ENCODE measurements at regions of chr1 and their contacts with region 1.

Region 1: DNA sequence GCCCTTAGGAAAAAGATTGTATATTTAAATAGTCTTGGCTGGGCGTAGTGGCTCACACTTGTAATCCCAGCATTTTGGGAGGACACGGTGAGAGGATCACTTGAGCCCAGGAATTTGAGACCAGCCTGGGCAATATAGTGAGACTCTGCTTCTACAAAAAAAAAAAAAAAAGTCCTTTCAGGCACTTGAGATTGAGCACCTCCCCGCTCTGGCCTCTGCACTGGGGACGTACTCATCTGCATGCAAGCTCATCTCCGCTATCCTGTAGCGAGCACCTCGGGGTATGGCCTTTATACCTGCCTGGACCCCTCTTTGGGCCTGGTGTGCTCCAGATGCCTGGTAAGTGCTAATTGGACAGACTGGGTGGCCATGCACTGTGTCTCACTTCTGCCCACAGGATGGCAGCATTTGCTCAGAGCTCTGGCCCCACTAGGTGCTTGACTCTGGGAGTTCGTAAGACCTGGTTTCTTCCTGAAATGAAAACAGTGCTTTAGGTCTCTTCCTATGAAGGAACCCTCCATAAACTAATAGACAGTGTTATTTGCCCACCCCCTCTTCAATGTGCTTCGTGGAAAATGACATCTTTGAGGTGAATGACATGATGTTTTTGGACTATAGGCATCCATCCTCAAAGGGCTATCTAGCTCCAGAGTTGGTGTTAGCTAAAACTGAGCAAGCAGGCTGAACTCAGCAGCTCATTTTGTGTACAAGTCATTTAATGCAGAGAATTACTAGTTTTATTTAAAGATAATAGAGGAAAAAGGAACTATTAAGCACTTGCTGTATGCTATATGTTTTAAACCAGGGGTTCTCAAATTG is 61.7 kb upstream of the ADAR start:
- DNase-seq: peak; percentile 85 to 88
- ATAC-seq: peak; percentile 100
- H3K4me3 ChIP-seq: no peak overlapping the region
- H3K27ac ChIP-seq: no peak overlapping the region
- H3K4me1 ChIP-seq: no peaks in the 10 kb centered on the region
- CTCF ChIP-seq: peak; percentile 87
- EP300 ChIP-seq: no peak
- POLR2A ChIP-seq: no peak
- RAD21 ChIP-seq: peak; percentile 94 to 97

Region 2: DNA sequence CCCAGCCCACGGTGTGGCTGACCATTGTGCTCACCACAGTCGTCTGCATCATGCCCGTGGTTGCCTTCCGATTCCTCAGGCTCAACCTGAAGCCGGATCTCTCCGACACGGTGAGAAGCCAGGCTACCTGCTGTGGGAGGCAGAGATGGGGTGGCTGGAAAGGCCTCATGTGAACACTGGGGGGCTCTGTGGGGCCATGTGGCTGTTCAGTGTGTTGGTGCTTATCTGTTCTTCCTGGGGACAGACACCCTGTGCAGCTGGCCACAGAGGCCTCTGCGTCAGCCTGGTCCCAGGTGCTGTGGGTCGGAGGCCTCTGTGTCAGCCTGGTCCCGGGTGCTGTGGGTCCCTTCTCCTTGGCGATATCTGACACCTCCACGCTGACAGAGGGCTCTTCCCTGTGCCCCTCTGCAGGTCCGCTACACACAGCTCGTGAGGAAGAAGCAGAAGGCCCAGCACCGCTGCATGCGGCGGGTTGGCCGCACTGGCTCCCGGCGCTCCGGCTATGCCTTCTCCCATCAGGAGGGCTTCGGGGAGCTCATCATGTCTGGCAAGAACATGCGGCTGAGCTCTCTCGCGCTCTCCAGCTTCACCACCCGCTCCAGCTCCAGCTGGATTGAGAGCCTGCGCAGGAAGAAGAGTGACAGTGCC is 321.1 kb before region 1 on chr1:
- CTCF ChIA-PET with region 1: no interaction called
- POLR2A ChIA-PET with region 1: no interaction called
- DNase-seq: peak in 1 of 2 experiments; percentile 24
- ATAC-seq: peak; percentile 38 to 53; a peak in 4 of 6 replicates
- H3K4me3 ChIP-seq: no peak overlapping the region
- H3K27ac ChIP-seq: no peak overlapping the region
- H3K4me1 ChIP-seq: peaks cover 2% of the 10 kb centered on the region; the same call in 1 of the 3 replicates
- CTCF ChIP-seq: peak; percentile 20; the same call in 1 of the 3 replicates
- EP300 ChIP-seq: no peak
- POLR2A ChIP-seq: no peak
- RAD21 ChIP-seq: peak; percentile 42 to 44; a peak in 4 of 5 replicates

Region 3: GRCh38 chr1:154558575-154559465 is 110.9 kb before region 1 on chr1 and contains the start of gene UBE2Q1:
- CTCF ChIA-PET with region 1: interaction called, 25 read pairs
- POLR2A ChIA-PET with region 1: no interaction called
- DNase-seq: peak; percentile 92 to 99
- ATAC-seq: peak; percentile 90 to 94
- H3K4me3 ChIP-seq: peak within 1 kb of the TSS; percentile 85
- H3K27ac ChIP-seq: peak within 1 kb of the TSS; percentile 93 to 96
- H3K4me1 ChIP-seq: peaks cover 16% of the 10 kb centered on the region
- CTCF ChIP-seq: no peak
- EP300 ChIP-seq: no peak
- POLR2A ChIP-seq: peak; percentile 73
- RAD21 ChIP-seq: no peak
- polyA plus RNA-seq, gene UBE2Q1: 17.6 and 26.6 TPM in 2 replicates

Region 4: DNA sequence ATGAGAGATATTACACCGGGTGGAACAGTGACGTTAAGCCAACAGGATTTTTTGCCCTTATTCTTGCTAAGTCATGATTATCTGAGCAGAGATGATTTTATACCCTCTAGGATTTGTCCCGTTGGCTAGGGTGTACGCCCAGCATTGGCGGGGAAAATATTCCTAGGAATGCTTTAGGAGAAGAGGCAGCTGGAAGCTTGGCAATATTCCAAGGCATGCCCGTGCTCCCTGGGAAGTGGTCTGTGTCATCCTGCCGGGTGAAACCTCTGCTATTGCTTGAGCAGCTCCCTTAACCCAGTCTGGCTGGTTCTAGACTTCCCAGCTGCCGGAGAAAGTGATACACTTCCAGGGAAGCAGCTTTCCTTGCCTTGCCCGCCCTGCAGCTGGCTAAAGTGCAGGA is 85.9 kb before region 1 on chr1:
- CTCF ChIA-PET with region 1: no interaction called
- POLR2A ChIA-PET with region 1: no interaction called
- DNase-seq: no peak
- ATAC-seq: no peak
- H3K4me3 ChIP-seq: no peak overlapping the region
- H3K27ac ChIP-seq: no peak overlapping the region
- H3K4me1 ChIP-seq: no peaks in the 10 kb centered on the region
- CTCF ChIP-seq: no peak
- EP300 ChIP-seq: no peak
- POLR2A ChIP-seq: no peak
- RAD21 ChIP-seq: no peak

Region 5: DNA sequence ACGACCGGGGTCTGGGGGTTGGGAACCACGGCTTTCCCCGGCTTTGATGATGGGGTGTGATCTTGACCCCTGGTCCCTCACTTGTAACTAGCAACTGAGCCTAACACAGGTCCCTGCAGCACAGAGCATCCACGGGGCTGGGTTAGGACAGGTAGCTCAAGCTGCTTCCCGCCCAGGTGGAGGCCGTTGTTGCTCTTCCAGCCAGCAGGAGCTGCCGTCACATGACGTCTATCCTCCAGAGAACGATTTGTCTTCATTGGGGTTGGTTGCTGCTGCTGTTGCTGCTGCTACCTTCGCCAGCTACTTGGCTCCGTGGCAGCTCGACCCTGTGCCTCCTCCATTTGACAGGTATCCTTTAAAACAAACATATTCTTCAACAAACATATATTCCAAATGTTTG is 12.6 kb after region 1 on chr1:
- CTCF ChIA-PET with region 1: interaction called, 35 read pairs
- POLR2A ChIA-PET with region 1: no interaction called
- DNase-seq: no peak
- ATAC-seq: no peak
- H3K4me3 ChIP-seq: no peak overlapping the region
- H3K27ac ChIP-seq: no peak overlapping the region
- H3K4me1 ChIP-seq: no peaks in the 10 kb centered on the region
- CTCF ChIP-seq: no peak
- EP300 ChIP-seq: no peak
- POLR2A ChIP-seq: no peak
- RAD21 ChIP-seq: no peak

Region 6: DNA sequence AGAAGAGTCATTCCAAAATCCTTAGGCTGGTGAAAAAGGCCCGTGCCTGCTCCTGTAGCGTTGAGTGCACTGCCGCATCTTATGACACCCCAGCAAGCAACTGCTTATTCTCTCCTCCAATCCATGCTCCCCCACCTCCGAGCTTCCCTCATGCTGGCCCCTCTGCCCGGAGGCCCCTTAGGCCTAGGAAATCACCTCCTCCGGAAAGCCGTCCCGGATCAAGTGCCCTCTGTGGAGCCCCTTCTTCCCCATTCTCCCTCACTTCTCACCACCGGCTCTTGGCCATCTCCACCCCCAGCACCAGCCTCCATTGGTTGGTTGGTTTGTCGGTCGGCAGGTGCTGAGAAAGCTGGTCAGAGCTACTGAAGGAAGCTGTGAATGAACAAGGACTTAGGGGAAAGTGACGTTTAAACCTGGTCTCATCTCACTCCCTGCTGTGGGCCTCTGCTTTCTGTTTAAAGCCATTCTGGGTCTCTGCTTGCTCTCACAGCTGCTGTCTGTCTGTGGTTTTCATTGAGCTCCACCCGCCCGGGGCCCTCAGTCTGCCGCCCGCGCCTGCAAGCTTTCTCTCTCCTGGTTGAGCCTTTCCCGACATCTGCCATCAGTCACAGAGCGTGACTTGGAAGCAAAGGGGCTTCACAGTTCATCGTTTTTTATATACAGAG is 78.2 kb after region 1 on chr1:
- CTCF ChIA-PET with region 1: interaction called, 27 read pairs
- POLR2A ChIA-PET with region 1: no interaction called
- DNase-seq: no peak
- ATAC-seq: no peak
- H3K4me3 ChIP-seq: no peak overlapping the region
- H3K27ac ChIP-seq: no peak overlapping the region
- H3K4me1 ChIP-seq: no peaks in the 10 kb centered on the region
- CTCF ChIP-seq: no peak
- EP300 ChIP-seq: no peak
- POLR2A ChIP-seq: no peak
- RAD21 ChIP-seq: no peak

Region 7: DNA sequence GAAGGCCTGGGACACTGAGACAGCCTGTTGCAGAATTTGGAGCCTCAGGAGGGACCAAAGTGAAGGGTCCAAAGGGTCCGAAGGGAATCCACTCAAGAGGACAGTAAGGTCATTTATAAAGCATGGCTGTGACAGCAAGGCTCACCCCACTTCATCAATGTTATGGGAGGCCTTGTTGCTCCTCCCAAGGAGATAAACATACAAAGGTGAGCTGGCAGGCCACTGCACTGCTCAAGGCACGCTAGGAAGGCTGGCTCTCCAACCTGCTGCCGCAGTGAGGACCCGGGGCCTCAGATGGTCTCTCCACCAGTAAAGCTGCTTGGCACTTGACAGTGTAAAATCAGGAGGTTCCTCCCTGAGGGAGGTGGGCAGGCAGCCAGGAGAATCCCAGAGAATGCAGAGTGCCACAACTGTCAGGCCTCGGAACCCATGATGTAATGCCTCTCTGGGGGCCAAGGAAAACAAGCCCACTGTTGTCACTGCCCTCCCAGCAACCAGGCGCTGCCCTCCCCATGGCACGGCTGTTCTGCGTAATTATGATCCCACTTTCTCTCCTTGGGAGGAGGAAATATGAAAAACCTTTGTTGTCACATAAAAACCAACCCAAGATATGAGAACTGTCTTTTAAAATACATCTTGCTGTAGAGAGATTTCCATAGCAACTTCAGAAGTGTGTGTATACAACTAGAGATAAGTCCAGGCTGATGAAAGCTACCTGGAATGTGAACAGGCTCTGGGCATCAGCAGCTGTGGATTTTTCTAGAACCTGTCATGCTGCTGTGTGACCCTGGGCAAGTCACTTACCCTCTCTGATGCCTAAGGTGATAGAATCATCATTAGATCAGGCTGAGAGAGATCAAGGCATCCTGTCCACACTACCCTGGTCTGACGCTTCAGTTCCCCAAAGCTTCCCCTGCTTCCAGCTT is 97.9 kb after region 1 on chr1:
- CTCF ChIA-PET with region 1: interaction called, 78 read pairs
- POLR2A ChIA-PET with region 1: no interaction called
- DNase-seq: no peak
- ATAC-seq: no peak
- H3K4me3 ChIP-seq: no peak overlapping the region
- H3K27ac ChIP-seq: no peak overlapping the region
- H3K4me1 ChIP-seq: no peaks in the 10 kb centered on the region
- CTCF ChIP-seq: no peak
- EP300 ChIP-seq: no peak
- POLR2A ChIP-seq: no peak
- RAD21 ChIP-seq: no peak

Region 8: DNA sequence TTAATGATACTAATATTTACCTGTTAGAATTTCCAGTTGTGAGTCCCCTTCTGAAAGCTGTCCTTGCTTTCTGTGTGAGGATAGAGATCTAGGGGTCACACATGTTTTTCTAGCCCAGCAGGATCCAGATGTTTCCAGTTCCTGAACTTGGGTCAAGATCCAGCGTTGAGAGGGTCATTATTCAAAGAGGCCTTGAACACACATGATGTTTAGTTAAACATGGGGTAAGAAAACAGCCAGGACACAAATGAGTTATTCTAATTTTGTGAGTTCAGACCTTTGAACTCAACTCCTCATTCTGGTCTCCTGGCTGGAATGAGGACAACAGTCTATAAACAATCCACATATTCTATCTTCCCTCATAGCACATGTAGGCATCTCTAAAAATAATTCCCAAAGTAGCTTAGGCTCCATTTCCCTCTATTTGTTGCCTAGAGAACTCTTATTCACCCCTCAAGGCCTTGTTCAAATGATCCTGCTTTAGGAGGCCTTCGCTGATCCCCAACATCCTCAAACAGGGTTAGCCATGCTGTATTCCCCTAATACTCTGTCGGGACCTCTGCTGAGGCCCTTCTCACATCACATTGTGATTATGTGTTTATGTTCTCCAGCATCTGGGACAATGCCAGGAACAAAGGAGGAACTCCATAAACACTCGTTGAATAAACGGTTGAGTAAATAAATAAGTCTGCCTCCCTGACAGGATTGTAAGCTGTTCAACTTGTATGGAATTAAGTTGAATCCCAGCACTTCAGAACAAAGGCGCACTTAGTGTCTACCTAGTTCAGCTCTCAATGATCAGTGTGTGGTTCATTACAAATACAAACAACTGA is 215.4 kb after region 1 on chr1:
- CTCF ChIA-PET with region 1: interaction called, 72 read pairs
- POLR2A ChIA-PET with region 1: no interaction called
- DNase-seq: no peak
- ATAC-seq: no peak
- H3K4me3 ChIP-seq: no peak overlapping the region
- H3K27ac ChIP-seq: no peak overlapping the region
- H3K4me1 ChIP-seq: peaks cover 4% of the 10 kb centered on the region; the same call in 1 of the 3 replicates
- CTCF ChIP-seq: no peak
- EP300 ChIP-seq: no peak
- POLR2A ChIP-seq: no peak
- RAD21 ChIP-seq: no peak